Panc1 (cell line): ENCODE measurements at regions of chr5 and their contacts with region 1.

Region 1: DNA sequence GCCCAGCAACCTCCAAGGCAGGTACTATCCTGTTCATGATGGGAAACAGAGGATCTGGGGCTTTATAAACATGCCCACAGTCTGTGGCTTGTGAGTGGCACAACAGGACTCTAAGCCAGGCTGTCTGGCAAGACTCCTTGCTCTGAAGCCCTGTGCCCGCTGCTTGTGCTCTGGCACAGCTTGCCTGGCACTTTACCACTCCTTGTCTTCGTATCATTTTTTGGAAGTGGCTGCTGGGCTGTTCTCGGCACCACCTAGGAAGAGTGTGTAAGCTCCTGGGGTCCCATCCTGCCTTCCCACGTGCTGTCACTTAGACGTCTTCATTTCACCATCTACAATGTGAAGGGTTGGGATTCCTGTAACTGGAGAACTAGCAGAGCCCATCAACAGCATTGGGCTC is 59.3 kb upstream of the GLRX start:
- DNase-seq: no peak
- ATAC-seq: no peak
- H3K4me3 ChIP-seq: no peak overlapping the region
- H3K27ac ChIP-seq: no peak overlapping the region
- H3K4me1 ChIP-seq: no peaks in the 10 kb centered on the region; the same call in 1 of the 2 replicates
- H3K27me3 ChIP-seq: no peaks in the 10 kb centered on the region
- CTCF ChIP-seq: no peak

Region 2: DNA sequence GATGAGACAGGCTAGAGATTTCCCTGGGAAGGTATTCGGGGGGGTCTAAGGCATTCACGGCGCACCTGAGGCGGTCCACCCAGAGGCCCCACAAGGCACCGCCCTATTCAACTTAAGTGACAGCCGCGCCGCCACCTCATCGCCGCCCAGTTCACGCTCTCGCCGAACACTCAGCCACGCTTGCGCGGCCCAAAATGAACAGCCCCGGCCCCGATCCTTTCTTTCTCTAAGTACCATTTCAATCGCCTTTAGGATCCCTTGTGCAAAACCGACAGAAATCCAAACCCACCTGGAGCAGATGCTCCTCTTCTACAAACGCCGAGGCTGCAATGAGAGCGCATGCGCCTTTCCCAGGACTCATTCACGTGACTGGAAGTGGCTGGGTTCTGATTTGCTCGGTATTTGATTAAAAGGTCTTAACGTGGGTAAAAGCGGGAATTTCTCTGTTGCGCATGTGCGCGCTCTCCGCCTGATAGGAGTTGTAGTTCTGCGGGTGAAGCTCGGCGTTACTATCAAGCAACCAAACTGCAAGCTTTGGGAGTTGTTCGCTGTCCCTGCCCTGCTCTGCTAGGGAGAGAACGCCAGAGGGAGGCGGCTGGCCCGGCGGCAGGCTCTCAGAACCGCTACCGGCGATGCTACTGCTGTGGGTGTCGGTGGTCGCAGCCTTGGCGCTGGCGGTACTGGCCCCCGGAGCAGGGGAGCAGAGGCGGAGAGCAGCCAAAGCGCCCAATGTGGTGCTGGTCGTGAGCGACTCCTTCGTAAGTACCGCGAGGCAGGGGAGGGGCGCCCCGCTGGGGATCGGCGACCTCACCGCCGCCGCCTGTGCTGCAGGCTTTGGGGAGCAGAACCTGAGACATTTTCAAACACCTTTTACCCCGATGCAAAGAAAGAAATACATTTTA is 326.9 kb before region 1 on chr5 and contains the starts of genes ARSK and SKIC3:
- CTCF ChIA-PET with region 1: interaction called, 10 read pairs
- POLR2A ChIA-PET with region 1: no interaction called
- in situ Hi-C with region 1: no loop called
- intact Hi-C with region 1: no loop called
- DNase-seq: peak; percentile 99
- ATAC-seq: peak; percentile 96
- H3K4me3 ChIP-seq: peak within 1 kb of the TSS; percentile 70 to 89
- H3K27ac ChIP-seq: peak within 1 kb of the TSS; percentile 94
- H3K4me1 ChIP-seq: peaks cover 16% of the 10 kb centered on the region; the same call in 1 of the 2 replicates
- H3K27me3 ChIP-seq: no peaks in the 10 kb centered on the region
- CTCF ChIP-seq: peak; percentile 26
- total RNA-seq, gene ARSK: 13.7 TPM
- total RNA-seq, gene SKIC3: 69.1 TPM

Region 3: GRCh38 chr5:95892780-95893354 is 11.0 kb after region 1 on chr5:
- CTCF ChIA-PET with region 1: no interaction called
- POLR2A ChIA-PET with region 1: interaction called, 10 read pairs
- in situ Hi-C with region 1: no loop called
- intact Hi-C with region 1: no loop called
- DNase-seq: no peak
- ATAC-seq: peak; percentile 90
- H3K4me3 ChIP-seq: no peak overlapping the region
- H3K27ac ChIP-seq: no peak overlapping the region
- H3K4me1 ChIP-seq: no peaks in the 10 kb centered on the region
- H3K27me3 ChIP-seq: no peaks in the 10 kb centered on the region
- CTCF ChIP-seq: peak; percentile 75

Region 4: DNA sequence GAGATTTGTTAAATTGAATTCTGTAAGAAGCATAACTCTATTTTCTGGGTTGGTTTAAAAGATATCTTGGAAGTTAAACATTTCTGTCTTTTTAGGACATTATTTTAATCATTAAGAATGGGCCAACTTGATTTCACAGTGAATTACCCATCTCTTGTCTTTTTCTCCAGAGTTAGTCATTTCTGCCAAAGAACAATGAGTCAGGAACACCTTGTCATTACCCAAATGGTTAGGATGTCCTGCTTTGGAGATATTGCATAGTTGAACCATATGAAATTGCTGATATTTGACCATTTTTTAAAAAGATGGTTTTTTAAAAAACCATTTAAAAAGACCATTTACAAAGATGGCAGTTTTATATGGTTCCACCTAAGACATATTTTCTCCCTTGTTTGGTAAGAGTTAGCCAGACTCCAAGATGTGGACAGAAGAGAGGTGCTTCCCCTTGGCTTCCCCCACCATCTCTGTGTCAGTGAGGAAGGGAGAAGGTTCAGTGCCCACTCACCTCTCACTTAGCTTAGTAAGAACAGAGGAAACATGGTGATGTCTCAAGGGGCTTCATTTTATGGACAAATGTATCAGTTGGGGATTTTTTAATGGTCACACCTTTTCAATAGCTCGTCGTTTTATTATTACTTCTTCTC is 448.2 kb after region 1 on chr5:
- CTCF ChIA-PET with region 1: no interaction called
- POLR2A ChIA-PET with region 1: interaction called, 12 read pairs
- in situ Hi-C with region 1: no loop called
- intact Hi-C with region 1: no loop called
- DNase-seq: no peak
- ATAC-seq: no peak
- H3K4me3 ChIP-seq: no peak overlapping the region
- H3K27ac ChIP-seq: peak overlapping the region; percentile 68; the same call in 1 of the 2 replicates
- H3K4me1 ChIP-seq: peaks cover 31% of the 10 kb centered on the region
- H3K27me3 ChIP-seq: no peaks in the 10 kb centered on the region
- CTCF ChIP-seq: no peak

Region 5: DNA sequence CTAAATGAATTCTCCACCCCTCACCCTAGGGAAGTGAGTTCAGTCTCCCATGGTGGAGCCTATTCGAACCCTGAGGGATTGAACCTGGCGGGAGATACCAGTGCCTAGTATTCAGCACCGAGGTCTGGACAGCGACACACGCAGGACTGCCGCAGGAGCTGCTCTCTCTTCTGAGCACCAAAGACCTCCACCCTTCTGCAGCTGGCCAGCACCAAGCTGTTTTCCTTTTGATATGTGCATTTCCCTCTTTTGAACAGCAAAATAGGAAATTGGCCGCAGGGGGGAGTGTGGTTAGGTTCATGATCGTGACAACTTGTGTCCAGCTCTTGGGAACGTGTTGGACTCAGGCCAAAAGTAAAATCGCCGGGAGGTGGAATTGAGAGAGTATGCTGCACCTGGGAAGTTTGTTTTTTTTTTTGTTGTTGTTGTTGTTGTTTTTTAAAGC is 552.4 kb after region 1 on chr5:
- CTCF ChIA-PET with region 1: no interaction called
- POLR2A ChIA-PET with region 1: no interaction called
- in situ Hi-C with region 1: no loop called
- intact Hi-C with region 1: no loop called
- DNase-seq: no peak
- ATAC-seq: no peak
- H3K4me3 ChIP-seq: no peak overlapping the region
- H3K27ac ChIP-seq: no peak overlapping the region
- H3K4me1 ChIP-seq: no peaks in the 10 kb centered on the region
- H3K27me3 ChIP-seq: peaks cover 27% of the 10 kb centered on the region
- CTCF ChIP-seq: no peak